IMR-90 (cell line): ENCODE measurements at regions of chr3 and their contacts with region 1.

Region 1: GRCh38 chr3:153209596-153209995 is 47.6 kb downstream of the RAP2B start:
- DNase-seq: peak; percentile 78
- ATAC-seq: peak; percentile 89
- H3K4me3 ChIP-seq: no peak overlapping the region
- H3K27ac ChIP-seq: peak overlapping the region; percentile 24; the same call in 1 of the 2 replicates
- H3K4me1 ChIP-seq: peaks cover 1% of the 10 kb centered on the region
- H3K27me3 ChIP-seq: no peaks in the 10 kb centered on the region
- CTCF ChIP-seq: no peak
- POLR2A ChIP-seq: no peak
- RAD21 ChIP-seq: no peak

Region 2: GRCh38 chr3:153038779-153039178 is 170.8 kb before region 1 on chr3:
- CTCF ChIA-PET with region 1: no interaction called
- POLR2A ChIA-PET with region 1: interaction called, 20 read pairs
- dilution Hi-C with region 1: no loop called
- in situ Hi-C with region 1: no loop called
- intact Hi-C with region 1: loop called (anchors 1 kb)
- DNase-seq: no peak
- ATAC-seq: no peak
- H3K4me3 ChIP-seq: no peak overlapping the region
- H3K27ac ChIP-seq: no peak overlapping the region
- H3K4me1 ChIP-seq: peaks cover 1% of the 10 kb centered on the region
- H3K27me3 ChIP-seq: no peaks in the 10 kb centered on the region
- CTCF ChIP-seq: no peak
- POLR2A ChIP-seq: no peak
- RAD21 ChIP-seq: no peak

Region 3: DNA sequence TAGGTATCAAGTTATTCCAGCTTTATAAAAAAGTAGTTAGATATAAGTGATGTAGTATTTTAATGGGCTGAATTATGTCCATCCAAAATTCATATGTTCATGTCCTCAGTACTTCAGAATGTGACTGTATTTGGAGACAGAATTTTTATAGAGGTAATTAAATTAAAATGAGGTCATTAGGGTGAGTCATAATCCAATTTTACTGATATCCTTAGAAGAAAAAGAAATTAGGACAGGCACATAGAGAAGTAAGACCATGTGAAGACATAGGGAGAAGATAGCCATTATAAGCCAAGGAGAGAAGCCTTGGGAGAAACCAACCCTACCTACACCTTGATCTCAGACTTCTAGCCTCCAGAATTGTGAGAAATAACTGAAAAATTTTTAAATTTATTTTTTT is 17.3 kb before region 1 on chr3:
- CTCF ChIA-PET with region 1: no interaction called
- POLR2A ChIA-PET with region 1: interaction called, 13 read pairs
- dilution Hi-C with region 1: no loop called
- in situ Hi-C with region 1: no loop called
- intact Hi-C with region 1: no loop called
- DNase-seq: no peak
- ATAC-seq: no peak
- H3K4me3 ChIP-seq: no peak overlapping the region
- H3K27ac ChIP-seq: no peak overlapping the region
- H3K4me1 ChIP-seq: no peaks in the 10 kb centered on the region
- H3K27me3 ChIP-seq: no peaks in the 10 kb centered on the region
- CTCF ChIP-seq: no peak
- POLR2A ChIP-seq: no peak
- RAD21 ChIP-seq: no peak